IMR-90 (cell line): ENCODE measurements at regions of chr12 and their contacts with region 1.

Region 1: DNA sequence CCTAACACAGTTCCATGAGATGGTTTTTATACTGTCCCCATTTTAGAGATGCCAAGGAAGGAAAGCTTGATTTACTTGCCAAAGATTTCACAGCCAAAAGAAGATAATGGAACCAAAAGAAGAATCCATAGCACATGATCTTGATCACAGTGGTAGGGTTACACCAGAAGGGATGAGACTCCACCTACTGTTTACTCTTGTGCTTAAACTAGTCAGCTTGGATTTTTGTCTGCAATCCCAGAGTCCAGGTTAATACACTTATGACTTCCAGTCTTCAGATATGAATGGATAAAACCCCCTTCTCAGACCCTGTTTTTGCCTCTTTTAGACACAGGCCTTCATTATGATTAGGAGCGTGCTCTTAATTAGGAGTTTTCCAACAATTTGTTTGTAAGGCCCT is 454.2 kb downstream of the AEBP2 start:
- DNase-seq: peak; percentile 54
- ATAC-seq: peak; percentile 90
- H3K4me3 ChIP-seq: no peak overlapping the region
- H3K27ac ChIP-seq: no peak overlapping the region
- H3K4me1 ChIP-seq: peaks cover 5% of the 10 kb centered on the region
- H3K27me3 ChIP-seq: no peaks in the 10 kb centered on the region
- CTCF ChIP-seq: peak; percentile 52
- POLR2A ChIP-seq: no peak
- RAD21 ChIP-seq: peak; percentile 55

Region 2: DNA sequence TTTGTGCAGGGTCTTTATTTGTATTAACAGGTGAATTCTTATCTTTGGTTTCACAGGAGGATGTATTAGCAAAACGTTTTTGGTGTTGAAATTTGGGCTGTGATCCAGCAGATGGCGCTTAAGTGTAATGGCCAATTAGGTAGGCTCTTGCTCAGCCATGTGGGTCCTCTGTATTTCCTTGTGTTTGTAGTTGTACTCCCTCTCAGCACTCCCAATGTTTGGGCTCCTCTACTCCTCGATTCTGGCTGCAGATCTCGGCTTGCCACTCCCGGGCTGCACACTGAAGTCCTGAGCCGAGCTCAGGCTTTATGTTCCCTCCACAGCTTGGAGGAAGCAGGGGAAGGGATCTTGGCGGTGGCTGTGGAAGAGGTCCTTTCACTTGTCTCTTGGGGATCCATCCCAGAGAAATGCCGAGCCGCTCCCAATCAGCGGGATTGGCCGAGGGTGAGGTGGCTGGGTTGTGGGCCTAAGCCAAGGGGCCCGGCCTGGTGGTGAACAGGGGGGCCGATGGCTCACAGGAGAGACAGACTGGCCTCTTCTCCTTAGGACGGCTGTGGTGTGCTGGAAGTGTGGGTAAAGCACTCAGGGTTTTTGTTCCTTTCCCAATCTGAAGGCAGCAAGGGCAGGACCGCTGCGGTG is 320.5 kb before region 1 on chr12:
- CTCF ChIA-PET with region 1: no interaction called
- POLR2A ChIA-PET with region 1: no interaction called
- dilution Hi-C with region 1: no loop called
- in situ Hi-C with region 1: no loop called
- intact Hi-C with region 1: loop called (anchors 10 kb)
- DNase-seq: peak; percentile 66
- ATAC-seq: peak; percentile 21; the same call in 1 of the 2 replicates
- H3K4me3 ChIP-seq: no peak overlapping the region
- H3K27ac ChIP-seq: peak overlapping the region; percentile 61
- H3K4me1 ChIP-seq: peaks cover 24% of the 10 kb centered on the region
- H3K27me3 ChIP-seq: no peaks in the 10 kb centered on the region
- CTCF ChIP-seq: peak; percentile 58
- POLR2A ChIP-seq: no peak
- RAD21 ChIP-seq: peak; percentile 60

Region 3: GRCh38 chr12:19847294-19848059 is 46.0 kb before region 1 on chr12:
- CTCF ChIA-PET with region 1: no interaction called
- POLR2A ChIA-PET with region 1: no interaction called
- dilution Hi-C with region 1: no loop called
- in situ Hi-C with region 1: no loop called
- intact Hi-C with region 1: no loop called
- DNase-seq: peak; percentile 31
- ATAC-seq: peak; percentile 59
- H3K4me3 ChIP-seq: no peak overlapping the region
- H3K27ac ChIP-seq: peak overlapping the region; percentile 95
- H3K4me1 ChIP-seq: peaks cover 11% of the 10 kb centered on the region
- H3K27me3 ChIP-seq: no peaks in the 10 kb centered on the region
- CTCF ChIP-seq: no peak
- POLR2A ChIP-seq: no peak
- RAD21 ChIP-seq: no peak

Region 4: GRCh38 chr12:19938031-19938430 is 44.5 kb after region 1 on chr12:
- CTCF ChIA-PET with region 1: no interaction called
- POLR2A ChIA-PET with region 1: no interaction called
- dilution Hi-C with region 1: no loop called
- in situ Hi-C with region 1: no loop called
- intact Hi-C with region 1: no loop called
- DNase-seq: no peak
- ATAC-seq: no peak
- H3K4me3 ChIP-seq: no peak overlapping the region
- H3K27ac ChIP-seq: no peak overlapping the region
- H3K4me1 ChIP-seq: no peaks in the 10 kb centered on the region
- H3K27me3 ChIP-seq: no peaks in the 10 kb centered on the region
- CTCF ChIP-seq: no peak
- POLR2A ChIP-seq: no peak
- RAD21 ChIP-seq: no peak